Naive thymus-derived CD4-positive, alpha-beta T cell (primary cell): ENCODE measurements at regions of chr12 and their contacts with region 1.

Region 1: DNA sequence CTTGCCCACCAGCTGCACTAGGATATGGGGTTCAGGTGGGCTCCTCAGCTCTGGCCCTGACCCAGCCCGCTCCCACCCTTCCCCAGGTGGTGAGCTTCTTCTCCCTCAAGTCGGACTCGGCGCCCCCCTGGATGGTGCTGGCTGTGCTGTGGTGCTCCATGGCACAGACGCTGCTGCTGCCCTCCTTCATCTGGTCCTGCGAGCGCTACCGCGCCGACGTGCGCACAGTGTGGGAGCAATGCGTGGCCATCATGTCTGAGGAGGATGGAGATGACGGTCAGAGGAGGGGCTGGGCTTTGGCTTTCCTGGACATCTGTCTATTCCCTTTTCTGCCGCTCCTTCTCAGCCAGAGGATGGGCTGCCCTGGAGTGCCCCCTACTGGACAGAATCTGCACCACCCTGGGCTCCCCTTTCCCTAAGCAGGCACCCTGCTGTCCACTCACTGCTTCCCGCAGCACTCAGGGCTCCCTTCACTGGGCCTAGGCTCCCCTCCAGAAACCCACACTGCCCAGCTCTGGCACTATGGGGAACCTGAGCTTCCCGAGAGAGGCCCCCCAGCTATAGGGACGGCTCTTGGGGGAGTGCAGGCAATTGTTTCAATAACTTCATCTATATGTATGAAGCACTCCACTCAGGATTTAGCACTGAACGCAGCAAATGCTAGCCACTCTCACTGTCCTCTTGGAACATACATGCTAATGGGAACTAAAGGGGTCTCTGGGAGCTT is 2.6 kb upstream of the P3H3 start:
- DNase-seq: peak; percentile 69 to 89 (median 78)
- ATAC-seq: peak; percentile 79
- H3K4me3 ChIP-seq: no peak overlapping the region
- H3K4me3 Mint-ChIP-seq: peak overlapping the region in 7 of 10 donors; percentile 5 to 65 (median 35)
- H3K27ac ChIP-seq: no peak overlapping the region
- H3K27ac Mint-ChIP-seq: peak overlapping the region in 4 of 9 donors; percentile 22 to 84 (median 53)
- H3K4me1 ChIP-seq: peaks cover 4 to 13% of the 10 kb centered on the region in 2 donors
- H3K4me1 Mint-ChIP-seq: peaks cover 27 to 42% (median 39%) of the 10 kb centered on the region in 7 donors
- H3K27me3 ChIP-seq: peaks cover 0 to 12% of the 10 kb centered on the region in 2 donors
- H3K27me3 Mint-ChIP-seq: peaks cover 9 to 63% (median 26%) of the 10 kb centered on the region in 5 donors

Region 2: GRCh38 chr12:6570264-6570887 is 255.2 kb before region 1 on chr12:
- CTCF ChIA-PET with region 1: no interaction called
- POLR2A ChIA-PET with region 1: interaction called, 3 read pairs
- intact Hi-C with region 1: loop called in 1 of 2 experiments (anchors 5 kb)
- DNase-seq: peak in 1 of 9 donors; percentile 51
- ATAC-seq: no peak
- H3K4me3 ChIP-seq: no peak overlapping the region
- H3K4me3 Mint-ChIP-seq: peak overlapping the region in 7 of 10 donors; percentile 36 to 100 (median 94)
- H3K27ac ChIP-seq: no peak overlapping the region
- H3K27ac Mint-ChIP-seq: peak overlapping the region; percentile 47 to 99 (median 86)
- H3K4me1 ChIP-seq: peaks cover 8 to 18% of the 10 kb centered on the region in 2 donors
- H3K4me1 Mint-ChIP-seq: peaks cover 17 to 49% (median 44%) of the 10 kb centered on the region in 7 donors
- H3K27me3 ChIP-seq: no peaks in the 10 kb centered on the region
- H3K27me3 Mint-ChIP-seq: no peaks in the 10 kb centered on the region

Region 3: GRCh38 chr12:6735448-6736191 is 89.9 kb before region 1 on chr12:
- CTCF ChIA-PET with region 1: interaction called, 17 read pairs
- POLR2A ChIA-PET with region 1: no interaction called
- intact Hi-C with region 1: loop called in 1 of 2 experiments (anchors 1 kb)
- DNase-seq: peak in 4 of 9 donors; percentile 23 to 39 (median 29)
- ATAC-seq: peak; percentile 81
- H3K4me3 ChIP-seq: no peak overlapping the region
- H3K4me3 Mint-ChIP-seq: no peak overlapping the region
- H3K27ac ChIP-seq: no peak overlapping the region
- H3K27ac Mint-ChIP-seq: peak overlapping the region in 1 of 9 donors; percentile 43
- H3K4me1 ChIP-seq: no peaks in the 10 kb centered on the region
- H3K4me1 Mint-ChIP-seq: peaks cover 0 to 10% (median 5%) of the 10 kb centered on the region in 7 donors
- H3K27me3 ChIP-seq: no peaks in the 10 kb centered on the region
- H3K27me3 Mint-ChIP-seq: no peaks in the 10 kb centered on the region